PC-9 (cell line): ENCODE measurements at regions of chr11 and their contacts with region 1.

Region 1: GRCh38 chr11:2901854-2902783 is 16.5 kb upstream of the CDKN1C start:
- DNase-seq: peak; percentile 73 to 85
- H3K4me3 ChIP-seq: peak overlapping the region; percentile 66
- H3K27ac ChIP-seq: no peak overlapping the region
- H3K4me1 ChIP-seq: peaks cover 35% of the 10 kb centered on the region
- H3K27me3 ChIP-seq: no peaks in the 10 kb centered on the region
- CTCF ChIP-seq: no peak

Region 2: DNA sequence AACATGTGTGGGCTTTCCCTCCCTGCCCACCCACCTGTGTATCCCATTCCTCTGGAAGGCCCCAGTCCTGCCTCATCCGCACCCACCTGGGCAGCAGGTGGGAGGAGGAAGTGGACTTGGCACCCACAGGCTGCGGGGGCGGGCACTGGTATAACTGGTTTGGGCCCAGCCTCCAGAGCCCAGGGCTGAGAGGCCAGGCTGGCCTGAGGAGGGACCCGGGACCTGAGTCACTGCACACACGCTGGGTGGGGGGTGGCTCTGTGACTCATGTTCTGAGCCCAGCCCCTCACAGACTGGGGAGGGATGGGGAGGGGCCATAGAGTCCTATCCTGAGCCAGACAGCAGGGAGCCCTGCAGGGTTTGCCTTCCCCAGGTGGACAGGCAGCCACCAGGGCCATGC is 10.4 kb after region 1 on chr11:
- CTCF ChIA-PET with region 1: no interaction called
- POLR2A ChIA-PET with region 1: interaction called, 5 read pairs
- intact Hi-C with region 1: loop called (anchors 1 kb)
- DNase-seq: peak; percentile 90 to 94
- H3K4me3 ChIP-seq: peak overlapping the region; percentile 41; the same call in 1 of the 2 replicates
- H3K27ac ChIP-seq: peak overlapping the region; percentile 81
- H3K4me1 ChIP-seq: peaks cover 33% of the 10 kb centered on the region
- H3K27me3 ChIP-seq: no peaks in the 10 kb centered on the region
- CTCF ChIP-seq: no peak

Region 3: GRCh38 chr11:3359092-3359824 is 457.1 kb after region 1 on chr11:
- CTCF ChIA-PET with region 1: no interaction called
- POLR2A ChIA-PET with region 1: no interaction called
- intact Hi-C with region 1: no loop called
- DNase-seq: no peak
- H3K4me3 ChIP-seq: no peak overlapping the region
- H3K27ac ChIP-seq: no peak overlapping the region
- H3K4me1 ChIP-seq: no peaks in the 10 kb centered on the region
- H3K27me3 ChIP-seq: no peaks in the 10 kb centered on the region
- CTCF ChIP-seq: no peak